A549 (cell line): ENCODE measurements at regions of chr7 and their contacts with region 1.

Region 1: DNA sequence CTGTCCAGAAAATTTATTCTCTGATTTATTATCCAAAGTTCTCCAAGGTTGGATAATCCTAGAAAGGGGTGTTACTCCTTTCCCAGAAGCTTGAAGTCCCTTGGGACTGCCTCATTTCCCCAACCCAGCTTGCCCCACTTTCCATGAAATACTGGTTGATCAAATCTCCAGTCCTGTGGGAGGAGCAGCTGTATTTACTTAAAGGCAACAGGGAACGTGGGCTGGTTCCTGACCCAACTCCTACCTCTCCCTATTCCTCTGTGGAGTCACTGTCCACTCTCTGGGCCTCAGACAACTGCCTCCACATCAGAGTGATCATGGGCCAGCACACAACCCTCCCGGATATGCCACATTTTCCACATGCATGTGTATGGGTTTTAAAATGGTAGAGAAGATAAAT is 166.2 kb upstream of the PRR15 start:
- DNase-seq: no peak
- ATAC-seq: no peak
- H3K4me3 ChIP-seq: no peak overlapping the region
- H3K27ac ChIP-seq: no peak overlapping the region
- H3K4me1 ChIP-seq: no peaks in the 10 kb centered on the region
- CTCF ChIP-seq: no peak
- EP300 ChIP-seq: no peak
- POLR2A ChIP-seq: no peak
- RAD21 ChIP-seq: no peak

Region 2: GRCh38 chr7:29359481-29360093 is 37.8 kb before region 1 on chr7:
- CTCF ChIA-PET with region 1: no interaction called
- POLR2A ChIA-PET with region 1: interaction called, 12 read pairs
- DNase-seq: no peak
- ATAC-seq: no peak
- H3K4me3 ChIP-seq: no peak overlapping the region
- H3K27ac ChIP-seq: no peak overlapping the region
- H3K4me1 ChIP-seq: no peaks in the 10 kb centered on the region
- CTCF ChIP-seq: no peak
- EP300 ChIP-seq: no peak
- POLR2A ChIP-seq: no peak
- RAD21 ChIP-seq: no peak

Region 3: DNA sequence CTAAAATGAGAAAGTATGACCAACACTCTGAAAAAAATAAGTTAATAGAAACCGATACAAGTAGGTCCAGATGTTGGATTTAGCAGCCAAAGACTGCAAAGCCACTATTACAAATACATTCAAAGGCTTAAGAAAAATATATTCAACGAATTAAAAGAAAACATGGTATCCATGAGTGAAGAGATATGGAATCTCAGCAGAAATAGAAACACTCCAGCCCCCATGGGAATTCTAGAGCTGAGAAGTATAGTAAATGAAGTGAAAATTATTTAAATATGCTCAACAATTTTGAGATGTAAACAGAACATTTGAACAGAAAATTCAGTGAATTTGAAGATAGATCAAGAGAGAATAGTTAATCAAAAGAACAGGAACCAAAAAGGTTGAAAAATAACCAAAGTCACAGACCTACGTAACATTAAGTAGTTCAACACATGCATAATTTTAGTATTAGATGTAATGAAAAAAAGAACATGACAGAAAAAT is 336.9 kb after region 1 on chr7:
- CTCF ChIA-PET with region 1: no interaction called
- POLR2A ChIA-PET with region 1: no interaction called
- DNase-seq: no peak
- ATAC-seq: no peak
- H3K4me3 ChIP-seq: no peak overlapping the region
- H3K27ac ChIP-seq: no peak overlapping the region
- H3K4me1 ChIP-seq: no peaks in the 10 kb centered on the region
- CTCF ChIP-seq: no peak
- EP300 ChIP-seq: no peak
- POLR2A ChIP-seq: no peak
- RAD21 ChIP-seq: no peak